Activated T-helper 1 cell treated with anti-CD3 and anti-CD28 coated beads, Interleukin-12 subunit alpha, Interleukin-12 subunit beta, Interleukin-2, Interleukin-4 antibody, amounts not matched to agents 30 ng/mL and 10 ng/mL and 1 ng/mL, durations not matched to agents 14 hours and 24 hours and 36 hours (primary cell): ENCODE measurements at regions of chr4 and their contacts with region 1.

Region 1: GRCh38 chr4:54107951-54108873 is 8.2 kb downstream of the GSX2 start:
- DNase-seq: no peak
- H3K4me3 Mint-ChIP-seq: no peak overlapping the region
- H3K27ac Mint-ChIP-seq: no peak overlapping the region
- H3K4me1 Mint-ChIP-seq: peaks cover 12% of the 10 kb centered on the region
- H3K27me3 Mint-ChIP-seq: peaks cover 79% of the 10 kb centered on the region

Region 2: GRCh38 chr4:54091637-54092404 is 16.4 kb before region 1 on chr4:
- intact Hi-C with region 1: loop called (anchors 1 kb)
- DNase-seq: peak; percentile 71
- H3K4me3 Mint-ChIP-seq: peak overlapping the region; percentile 82
- H3K27ac Mint-ChIP-seq: peak overlapping the region; percentile 30
- H3K4me1 Mint-ChIP-seq: peaks cover 30% of the 10 kb centered on the region
- H3K27me3 Mint-ChIP-seq: peaks cover 74% of the 10 kb centered on the region